HepG2 (cell line): ENCODE measurements at regions of chr3 and their contacts with region 1.

Region 1: GRCh38 chr3:42118762-42119361 is 27.7 kb downstream of the TRAK1 start:
- DNase-seq: peak; percentile 74
- ATAC-seq: peak; percentile 96
- H3K4me3 ChIP-seq: no peak overlapping the region
- H3K27ac ChIP-seq: no peak overlapping the region
- H3K4me1 ChIP-seq: peaks cover 80% of the 10 kb centered on the region
- H3K27me3 ChIP-seq: no peaks in the 10 kb centered on the region
- CTCF ChIP-seq: peak; percentile 92
- EP300 ChIP-seq: no peak
- POLR2A ChIP-seq: no peak
- RAD21 ChIP-seq: peak; percentile 92

Region 2: DNA sequence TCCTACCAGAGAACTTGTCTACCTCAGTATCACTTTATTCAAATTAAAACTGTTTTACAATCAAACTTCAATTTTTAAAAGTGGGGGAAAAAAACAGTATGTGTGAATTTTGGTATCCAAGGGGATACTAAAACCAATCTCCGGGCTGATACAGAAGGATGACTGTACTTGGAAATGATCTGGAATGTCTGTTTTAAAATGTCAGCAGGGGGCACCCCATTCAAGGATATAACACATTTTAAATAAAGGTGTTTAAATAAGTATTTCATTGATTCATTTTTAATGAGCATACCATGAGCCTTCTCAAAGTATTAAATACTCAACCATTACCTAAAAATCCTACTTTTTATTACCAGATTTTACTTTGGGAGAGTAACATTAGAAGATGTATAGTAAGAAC is 224.9 kb before region 1 on chr3:
- CTCF ChIA-PET with region 1: no interaction called
- POLR2A ChIA-PET with region 1: no interaction called
- in situ Hi-C with region 1: no loop called
- intact Hi-C with region 1: loop called (anchors 5 kb)
- DNase-seq: peak; percentile 30
- ATAC-seq: no peak
- H3K4me3 ChIP-seq: no peak overlapping the region
- H3K27ac ChIP-seq: no peak overlapping the region
- H3K4me1 ChIP-seq: peaks cover 12% of the 10 kb centered on the region
- H3K27me3 ChIP-seq: no peaks in the 10 kb centered on the region
- CTCF ChIP-seq: peak; percentile 62
- EP300 ChIP-seq: no peak
- POLR2A ChIP-seq: no peak
- RAD21 ChIP-seq: 0 out of 2 replicates have a peak, but pooled peaks have one; percentile 25

Region 3: GRCh38 chr3:42129014-42129953 is 10.4 kb after region 1 on chr3:
- CTCF ChIA-PET with region 1: no interaction called
- POLR2A ChIA-PET with region 1: interaction called, 30 read pairs
- in situ Hi-C with region 1: no loop called
- intact Hi-C with region 1: loop called (anchors 1 kb)
- DNase-seq: peak; percentile 47
- ATAC-seq: no peak
- H3K4me3 ChIP-seq: no peak overlapping the region; a peak in 1 of 6 replicates
- H3K27ac ChIP-seq: peak overlapping the region; percentile 96
- H3K4me1 ChIP-seq: peaks cover 82% of the 10 kb centered on the region
- H3K27me3 ChIP-seq: no peaks in the 10 kb centered on the region
- CTCF ChIP-seq: no peak
- EP300 ChIP-seq: no peak
- POLR2A ChIP-seq: no peak
- RAD21 ChIP-seq: no peak

Region 4: DNA sequence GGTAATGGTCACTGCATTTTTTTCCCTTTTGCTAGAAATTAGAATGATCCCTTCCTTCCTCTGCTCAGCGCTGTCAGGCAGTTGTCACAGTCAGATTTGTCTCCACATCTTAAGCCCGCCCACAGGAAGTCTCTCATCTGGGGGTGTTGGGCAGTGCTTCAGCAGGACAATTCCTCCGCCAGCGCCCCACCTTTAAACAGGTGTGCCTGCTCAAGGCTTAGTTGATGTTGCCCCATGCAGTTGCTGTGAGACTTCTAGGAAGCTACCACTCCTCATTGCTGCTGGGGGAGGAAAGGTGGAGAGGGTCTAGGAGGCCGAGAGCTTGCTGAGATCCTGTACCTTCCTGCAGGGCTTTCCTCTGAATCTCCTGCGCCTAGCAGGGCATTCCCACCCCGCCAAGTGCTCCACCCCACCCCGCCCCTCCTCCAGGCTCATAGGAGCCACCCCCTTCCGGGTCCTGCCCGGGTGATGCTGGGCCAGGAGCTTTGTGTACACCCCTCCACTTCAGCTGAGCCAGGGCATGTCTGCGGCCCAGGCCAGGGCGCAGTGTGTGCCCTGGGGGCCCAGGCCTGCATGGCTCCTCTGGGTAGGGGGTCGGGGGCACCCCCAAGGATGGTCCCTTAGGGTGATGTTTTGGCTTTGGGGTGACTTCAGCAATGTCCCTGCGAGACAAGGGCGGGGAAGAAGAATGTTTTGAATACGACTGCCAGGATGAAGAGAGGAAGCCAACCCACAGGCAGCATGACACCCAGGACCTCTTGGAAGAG is 41.0 kb after region 1 on chr3:
- CTCF ChIA-PET with region 1: interaction called, 3 read pairs
- POLR2A ChIA-PET with region 1: interaction called, 6 read pairs
- in situ Hi-C with region 1: loop called (anchors 5 kb)
- intact Hi-C with region 1: loop called (anchors 5 kb)
- DNase-seq: peak; percentile 77
- ATAC-seq: peak; percentile 98
- H3K4me3 ChIP-seq: peak overlapping the region; percentile 57 to 81 (median 65)
- H3K27ac ChIP-seq: peak overlapping the region; percentile 70
- H3K4me1 ChIP-seq: peaks cover 55% of the 10 kb centered on the region
- H3K27me3 ChIP-seq: no peaks in the 10 kb centered on the region; a peak in 1 of 5 replicates
- CTCF ChIP-seq: no peak
- EP300 ChIP-seq: no peak
- POLR2A ChIP-seq: peak; percentile 33 to 64; a peak in 3 of 4 replicates
- RAD21 ChIP-seq: no peak

Region 5: GRCh38 chr3:42179110-42179725 is 60.4 kb after region 1 on chr3:
- CTCF ChIA-PET with region 1: no interaction called
- POLR2A ChIA-PET with region 1: interaction called, 4 read pairs
- in situ Hi-C with region 1: no loop called
- intact Hi-C with region 1: loop called (anchors 5 kb)
- DNase-seq: peak; percentile 83
- ATAC-seq: peak; percentile 92
- H3K4me3 ChIP-seq: peak overlapping the region in 1 of 3 experiments; percentile 29; a peak in 2 of 6 replicates
- H3K27ac ChIP-seq: peak overlapping the region; percentile 83
- H3K4me1 ChIP-seq: peaks cover 65% of the 10 kb centered on the region
- H3K27me3 ChIP-seq: no peaks in the 10 kb centered on the region
- CTCF ChIP-seq: no peak
- EP300 ChIP-seq: peak in 1 of 2 experiments; percentile 3; a peak in 1 of 4 replicates
- POLR2A ChIP-seq: no peak
- RAD21 ChIP-seq: 0 out of 2 replicates have a peak, but pooled peaks have one; percentile 13

Region 6: GRCh38 chr3:42190701-42191462 is 72.0 kb after region 1 on chr3:
- CTCF ChIA-PET with region 1: interaction called, 104 read pairs
- POLR2A ChIA-PET with region 1: interaction called, 15 read pairs
- in situ Hi-C with region 1: loop called (anchors 10 kb)
- intact Hi-C with region 1: loop called (anchors 1 kb)
- DNase-seq: peak; percentile 55
- ATAC-seq: peak; percentile 90
- H3K4me3 ChIP-seq: no peak overlapping the region
- H3K27ac ChIP-seq: no peak overlapping the region
- H3K4me1 ChIP-seq: no peaks in the 10 kb centered on the region
- H3K27me3 ChIP-seq: no peaks in the 10 kb centered on the region
- CTCF ChIP-seq: peak; percentile 90
- EP300 ChIP-seq: no peak
- POLR2A ChIP-seq: no peak
- RAD21 ChIP-seq: peak; percentile 88

Region 7: DNA sequence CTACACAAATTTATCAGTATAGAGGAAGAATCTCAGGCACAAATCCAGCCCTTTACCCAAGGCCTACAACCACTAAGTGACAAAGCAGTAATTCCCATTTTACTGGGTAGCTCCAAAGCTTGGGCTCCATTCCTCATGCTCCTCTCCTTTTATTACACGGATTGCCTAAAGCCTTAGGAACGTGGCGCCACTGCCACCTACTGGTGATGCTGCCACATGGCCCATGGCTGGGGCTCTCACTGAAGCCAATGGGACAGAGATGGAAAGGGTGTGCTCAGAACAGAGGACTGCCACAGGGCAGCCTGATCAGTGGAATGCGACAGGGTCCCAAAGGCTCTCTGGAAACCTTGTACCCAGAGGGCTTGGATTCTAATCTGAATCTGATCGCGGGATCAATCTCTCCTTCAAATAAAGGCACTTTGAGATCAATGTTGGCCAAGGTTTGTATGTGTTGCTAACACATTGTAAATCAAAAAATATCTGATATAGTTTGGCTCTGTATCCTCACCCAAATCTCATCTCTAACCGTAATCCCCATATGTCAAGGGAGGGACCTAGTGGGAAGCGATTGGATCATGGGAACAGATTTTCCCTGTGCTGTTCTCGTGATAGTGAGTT is 325.1 kb after region 1 on chr3:
- CTCF ChIA-PET with region 1: no interaction called
- POLR2A ChIA-PET with region 1: no interaction called
- in situ Hi-C with region 1: loop called (anchors 25 kb)
- intact Hi-C with region 1: no loop called
- DNase-seq: peak; percentile 70
- ATAC-seq: peak; percentile 99
- H3K4me3 ChIP-seq: no peak overlapping the region
- H3K27ac ChIP-seq: no peak overlapping the region
- H3K4me1 ChIP-seq: no peaks in the 10 kb centered on the region
- H3K27me3 ChIP-seq: no peaks in the 10 kb centered on the region
- CTCF ChIP-seq: peak; percentile 98
- EP300 ChIP-seq: no peak
- POLR2A ChIP-seq: no peak
- RAD21 ChIP-seq: peak; percentile 97